ENCODE measurements at regions of chrX and their contacts with region 1.

Region 1: GRCh38 chrX:46588263-46588662 is 14.7 kb downstream of the CHST7 start:
- DNase-seq: peak in 4 of 5 donors; percentile 35 to 65 (median 38)
- H3K4me3 ChIP-seq: peak overlapping the region in 1 of 2 donors; percentile 6
- H3K4me3 Mint-ChIP-seq: peak overlapping the region; percentile 75 to 88 (median 80)
- H3K27ac ChIP-seq: peak overlapping the region; percentile 47
- H3K27ac Mint-ChIP-seq: peak overlapping the region; percentile 89 to 94 (median 91)
- H3K4me1 ChIP-seq: peaks cover 61% of the 10 kb centered on the region
- H3K4me1 Mint-ChIP-seq: peaks cover 23 to 68% (median 45%) of the 10 kb centered on the region in 4 donors
- H3K27me3 ChIP-seq: no peaks in the 10 kb centered on the region
- H3K27me3 Mint-ChIP-seq: no peaks in the 10 kb centered on the region

Region 2: DNA sequence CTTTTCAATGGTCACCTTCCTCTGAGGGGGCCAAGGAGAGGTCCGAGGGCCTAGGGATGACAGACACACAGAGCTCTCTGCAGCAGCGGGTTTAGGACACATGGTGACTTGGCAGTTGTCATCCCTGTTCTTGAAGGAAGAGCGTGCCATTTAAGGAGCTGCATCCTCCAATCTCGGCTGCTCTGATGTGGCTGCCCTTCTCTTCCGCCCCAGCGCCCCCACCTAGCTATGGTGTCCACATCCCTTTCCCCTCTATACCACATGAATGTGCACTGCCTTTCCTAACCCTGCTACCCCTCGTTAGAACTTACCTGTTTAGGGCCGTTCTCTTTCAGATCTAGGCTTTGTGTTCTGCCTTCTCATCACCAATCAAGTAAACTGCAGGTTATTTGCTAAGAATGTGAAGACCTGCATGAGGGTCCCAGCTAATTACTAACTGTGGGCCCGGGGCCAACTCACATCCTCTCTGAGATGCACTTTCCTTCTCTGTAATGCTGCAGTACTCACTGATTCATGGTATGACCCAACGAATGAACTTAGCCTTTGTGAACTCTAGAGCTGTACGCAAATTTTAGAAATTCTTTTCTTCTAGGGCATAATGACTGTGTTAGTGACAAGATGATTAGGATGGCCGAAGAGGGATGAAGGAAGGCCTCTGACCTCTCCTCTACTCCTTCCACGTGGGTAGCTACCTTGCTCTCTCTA is 23.5 kb after region 1 on chrX:
- CTCF ChIA-PET with region 1: no interaction called
- POLR2A ChIA-PET with region 1: interaction called, 22 read pairs
- intact Hi-C with region 1: no loop called
- DNase-seq: peak; percentile 65 to 77 (median 70)
- H3K4me3 ChIP-seq: peak overlapping the region in 1 of 2 donors; percentile 30
- H3K4me3 Mint-ChIP-seq: peak overlapping the region; percentile 44 to 78 (median 72)
- H3K27ac ChIP-seq: no peak overlapping the region
- H3K27ac Mint-ChIP-seq: peak overlapping the region in 5 of 7 donors; percentile 18 to 81 (median 72)
- H3K4me1 ChIP-seq: peaks cover 47% of the 10 kb centered on the region
- H3K4me1 Mint-ChIP-seq: peaks cover 27 to 57% (median 40%) of the 10 kb centered on the region in 4 donors
- H3K27me3 ChIP-seq: no peaks in the 10 kb centered on the region
- H3K27me3 Mint-ChIP-seq: no peaks in the 10 kb centered on the region

Region 3: DNA sequence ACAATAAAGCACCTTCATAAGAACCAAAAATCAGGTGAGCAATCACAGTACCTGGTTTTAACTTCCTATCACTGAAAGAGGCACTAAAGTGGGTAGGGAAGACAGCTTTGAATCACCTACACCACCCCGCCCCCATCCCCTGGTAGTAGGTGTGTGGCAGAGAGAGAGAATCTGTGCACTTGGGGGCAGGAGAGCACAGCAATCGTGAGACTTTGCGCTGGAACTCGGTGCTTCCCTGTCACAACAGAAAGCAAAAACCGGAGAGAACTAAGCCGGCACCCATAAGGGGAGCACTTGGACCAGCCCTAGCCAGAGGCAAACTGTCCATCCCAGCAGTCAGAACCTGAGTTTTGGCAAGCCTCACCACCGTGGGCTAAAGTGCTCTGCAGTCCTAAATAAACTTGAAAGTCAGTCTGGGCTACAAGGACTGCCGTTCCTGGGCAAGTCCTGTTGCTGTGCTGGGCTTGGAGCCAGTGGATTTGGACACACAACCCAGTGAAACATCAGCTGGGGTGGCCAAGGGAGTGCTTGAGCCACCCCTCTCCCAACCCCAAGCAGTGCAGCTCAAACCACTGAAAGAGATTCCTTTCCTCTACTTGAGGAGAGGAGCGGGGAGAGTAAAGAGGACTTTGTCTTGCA is 524.2 kb after region 1 on chrX:
- CTCF ChIA-PET with region 1: no interaction called
- POLR2A ChIA-PET with region 1: no interaction called
- intact Hi-C with region 1: no loop called
- DNase-seq: no peak
- H3K4me3 ChIP-seq: no peak overlapping the region
- H3K4me3 Mint-ChIP-seq: no peak overlapping the region
- H3K27ac ChIP-seq: no peak overlapping the region
- H3K27ac Mint-ChIP-seq: no peak overlapping the region
- H3K4me1 ChIP-seq: no peaks in the 10 kb centered on the region
- H3K4me1 Mint-ChIP-seq: no peaks in the 10 kb centered on the region
- H3K27me3 ChIP-seq: no peaks in the 10 kb centered on the region
- H3K27me3 Mint-ChIP-seq: no peaks in the 10 kb centered on the region